CD14-positive monocyte (primary cell): ENCODE measurements at regions of chr1 and their contacts with region 1.

Region 1: DNA sequence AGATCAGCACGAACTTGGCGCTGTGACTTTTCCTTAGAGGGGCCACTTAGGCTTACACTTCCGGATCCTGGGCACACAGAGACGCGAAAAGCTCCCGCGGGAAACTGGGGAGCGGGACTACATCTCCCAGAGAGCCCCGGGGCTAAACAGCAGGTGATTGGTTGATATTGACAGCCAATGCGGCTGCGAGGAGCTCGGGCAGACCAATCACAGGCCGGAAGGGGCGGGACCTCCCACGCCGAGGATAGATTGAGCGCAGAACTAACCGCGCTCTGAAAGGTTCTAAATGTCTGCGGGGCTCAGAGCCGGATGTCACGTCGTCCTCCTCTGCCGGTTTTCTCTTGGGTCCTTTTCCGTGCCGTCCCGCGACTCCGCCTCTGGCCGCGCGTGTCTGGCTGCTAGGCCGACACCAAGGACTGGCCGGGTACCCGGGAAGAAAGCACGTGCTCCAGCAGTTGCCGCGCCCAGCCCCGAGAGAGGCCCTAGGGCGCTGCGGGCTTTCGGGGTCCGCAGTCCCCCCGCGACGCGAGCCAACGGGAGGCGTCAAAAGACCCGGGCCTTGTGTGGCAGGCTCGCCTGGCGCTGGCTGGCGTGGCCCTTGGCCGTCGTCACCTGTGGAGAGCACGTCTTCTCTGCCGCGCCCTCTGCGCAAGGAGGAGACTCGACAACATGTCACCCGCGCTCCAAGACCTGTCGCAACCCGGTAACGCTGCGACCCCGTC is at the start of gene MTR:
- DNase-seq: peak; percentile 89 to 96 (median 93)
- H3K4me3 ChIP-seq: peak within 1 kb of the TSS; percentile 74 to 92 (median 90)
- H3K4me3 Mint-ChIP-seq: peak within 1 kb of the TSS; percentile 97 to 99
- H3K27ac ChIP-seq: peak within 1 kb of the TSS; percentile 83 to 89
- H3K27ac Mint-ChIP-seq: peak within 1 kb of the TSS; percentile 89 to 97 (median 94)
- H3K4me1 ChIP-seq: peaks cover 14 to 28% of the 10 kb centered on the region in 2 donors
- H3K4me1 Mint-ChIP-seq: peaks cover 27% of the 10 kb centered on the region
- H3K27me3 ChIP-seq: peaks cover 0 to 4% of the 10 kb centered on the region in 2 donors
- H3K27me3 Mint-ChIP-seq: peaks cover 5 to 9% (median 6%) of the 10 kb centered on the region in 3 donors
- CTCF ChIP-seq: no peak
- polyA plus RNA-seq, gene MTR: 3.4 to 5.4 (median 4.7) TPM

Region 2: GRCh38 chr1:235504496-235505222 is 1290.5 kb before region 1 on chr1:
- intact Hi-C with region 1: loop called in 1 of 2 experiments (anchors 10 kb)
- DNase-seq: peak; percentile 98 to 99 (median 99)
- H3K4me3 ChIP-seq: peak overlapping the region; percentile 52 to 91 (median 65)
- H3K4me3 Mint-ChIP-seq: peak overlapping the region; percentile 97 to 98
- H3K27ac ChIP-seq: peak overlapping the region; percentile 85 to 93
- H3K27ac Mint-ChIP-seq: peak overlapping the region; percentile 94 to 99 (median 98)
- H3K4me1 ChIP-seq: peaks cover 24% of the 10 kb centered on the region in 2 donors
- H3K4me1 Mint-ChIP-seq: peaks cover 23% of the 10 kb centered on the region
- H3K27me3 ChIP-seq: no peaks in the 10 kb centered on the region
- H3K27me3 Mint-ChIP-seq: peaks cover 0 to 2% (median 2%) of the 10 kb centered on the region in 3 donors
- CTCF ChIP-seq: peak; percentile 95

Region 3: DNA sequence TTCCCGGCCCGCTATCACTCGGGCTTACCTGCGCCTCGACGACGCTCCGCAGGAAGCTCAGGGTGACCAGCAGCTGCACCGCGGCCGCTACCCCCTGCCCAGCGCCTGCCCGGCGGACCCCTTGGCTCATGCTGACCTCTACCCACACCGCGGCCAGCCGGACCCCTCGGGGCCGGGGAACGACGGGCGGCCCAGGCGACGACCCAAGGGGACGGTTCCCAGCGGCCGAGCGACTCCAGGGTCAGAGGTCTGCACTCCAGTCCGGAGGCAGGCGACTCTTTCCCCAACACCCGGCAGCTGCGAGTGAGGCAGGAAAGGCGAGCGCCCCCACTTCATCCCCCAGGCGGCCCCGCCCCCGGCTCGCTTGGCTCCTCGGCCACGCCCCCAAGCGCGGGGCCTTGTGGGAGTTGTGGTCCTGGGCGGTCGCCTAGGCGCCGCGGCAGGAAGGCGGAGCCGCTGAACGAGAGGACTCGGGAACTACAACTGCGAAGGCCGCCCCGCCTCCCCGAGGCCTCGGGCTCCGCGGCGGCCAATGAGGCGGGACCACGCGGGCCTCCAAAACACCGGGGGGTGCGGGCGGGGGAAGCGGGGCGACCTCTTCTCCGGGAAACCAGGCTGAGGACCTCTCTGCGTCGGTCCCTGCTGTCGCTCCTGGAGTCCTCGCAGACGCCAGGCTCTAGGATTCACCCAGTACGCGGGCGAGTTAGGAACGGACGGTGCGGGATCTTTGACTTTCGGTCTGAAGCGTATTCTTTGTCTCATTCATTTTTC is 513.4 kb before region 1 on chr1 and contains the start of gene ERO1B:
- intact Hi-C with region 1: loop called in 1 of 2 experiments (anchors 10 kb)
- DNase-seq: peak; percentile 93 to 95 (median 94)
- H3K4me3 ChIP-seq: peak within 1 kb of the TSS; percentile 85 to 86 (median 86)
- H3K4me3 Mint-ChIP-seq: peak within 1 kb of the TSS; percentile 96 to 97
- H3K27ac ChIP-seq: peak within 1 kb of the TSS; percentile 8 to 86
- H3K27ac Mint-ChIP-seq: peak within 1 kb of the TSS; percentile 62 to 89 (median 85)
- H3K4me1 ChIP-seq: peaks cover 29 to 35% of the 10 kb centered on the region in 2 donors
- H3K4me1 Mint-ChIP-seq: peaks cover 45% of the 10 kb centered on the region
- H3K27me3 ChIP-seq: no peaks in the 10 kb centered on the region
- H3K27me3 Mint-ChIP-seq: peaks cover 0 to 3% (median 2%) of the 10 kb centered on the region in 3 donors
- CTCF ChIP-seq: no peak
- polyA plus RNA-seq, gene ERO1B: 2.7 to 4.2 (median 3.2) TPM